ENCODE measurements at regions of chr17 and their contacts with region 1.

Region 1: GRCh38 chr17:49997791-49998703 is 3.0 kb upstream of the DLX3 start:
- H3K4me3 ChIP-seq: no peak overlapping the region
- H3K27ac ChIP-seq: no peak overlapping the region
- H3K4me1 ChIP-seq: peaks cover 4% of the 10 kb centered on the region
- CTCF ChIP-seq: peak; percentile 95

Region 2: GRCh38 chr17:49556223-49556971 is 441.6 kb before region 1 on chr17:
- CTCF ChIA-PET with region 1: interaction called, 38 read pairs
- POLR2A ChIA-PET with region 1: no interaction called
- H3K4me3 ChIP-seq: no peak overlapping the region
- H3K27ac ChIP-seq: peak overlapping the region; percentile 12; the same call in 1 of the 2 replicates
- H3K4me1 ChIP-seq: 0 out of 2 replicates have a peak, but pooled peaks cover 2% of the 10 kb centered on the region
- CTCF ChIP-seq: peak; percentile 97

Region 3: DNA sequence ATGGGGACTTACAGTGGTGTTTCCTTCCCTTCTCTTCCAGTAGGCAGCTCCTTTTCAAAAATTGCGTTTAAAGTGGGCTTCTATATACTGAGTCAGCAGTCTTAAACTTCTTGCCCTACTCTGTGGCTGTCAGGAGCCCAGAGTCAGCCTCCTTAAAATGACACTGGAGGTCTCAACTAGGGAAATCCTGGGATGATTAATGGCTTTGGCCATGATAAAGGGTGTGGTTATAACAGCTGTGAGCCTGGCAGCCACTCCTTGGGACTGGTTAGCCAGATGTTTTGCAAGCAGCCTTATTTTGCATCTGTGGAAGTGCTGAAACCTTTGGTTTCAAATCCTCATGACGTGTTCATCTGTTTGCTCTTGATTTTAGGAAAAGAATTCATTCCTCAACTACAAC is 175.2 kb before region 1 on chr17:
- CTCF ChIA-PET with region 1: interaction called, 27 read pairs
- POLR2A ChIA-PET with region 1: no interaction called
- H3K4me3 ChIP-seq: no peak overlapping the region
- H3K27ac ChIP-seq: no peak overlapping the region
- H3K4me1 ChIP-seq: no peaks in the 10 kb centered on the region
- CTCF ChIP-seq: no peak

Region 4: DNA sequence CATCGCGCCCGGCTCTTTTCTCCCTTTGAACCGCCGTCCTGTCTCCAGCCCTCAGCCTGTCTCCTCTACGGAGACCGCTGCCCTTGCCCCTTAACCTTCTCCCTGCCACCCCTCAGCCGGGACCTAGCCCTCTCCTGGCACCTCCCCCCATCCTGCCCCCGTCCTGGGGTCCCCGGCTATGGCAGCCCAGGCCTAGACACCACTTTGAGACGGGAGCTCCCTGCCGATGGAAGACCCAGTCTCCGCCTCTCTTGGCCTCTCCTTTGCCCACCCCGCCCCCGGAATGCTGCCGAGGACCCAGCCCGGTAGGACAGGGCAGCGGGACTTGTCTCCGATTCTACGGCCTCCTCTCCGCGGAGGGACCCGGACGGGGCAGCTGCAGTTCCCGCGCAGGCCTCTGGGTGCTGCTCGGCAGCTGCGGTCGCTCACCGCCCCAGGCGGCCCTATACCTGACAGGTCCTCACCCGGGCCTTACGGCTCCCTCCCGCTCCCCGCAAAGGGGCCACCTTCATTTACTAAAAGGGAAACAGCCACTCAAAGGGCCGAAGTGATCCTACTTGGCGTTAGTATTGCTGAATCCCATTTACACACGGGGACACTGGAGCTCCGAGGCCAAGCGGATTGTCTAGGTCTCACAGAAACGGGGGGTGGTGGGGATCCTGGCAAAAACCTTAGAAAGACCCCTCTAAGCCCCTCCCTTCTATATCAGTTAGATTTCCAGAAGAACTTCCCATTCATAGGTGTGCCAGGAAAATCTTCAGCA is 117.6 kb before region 1 on chr17:
- CTCF ChIA-PET with region 1: interaction called, 122 read pairs
- POLR2A ChIA-PET with region 1: interaction called, 5 read pairs
- H3K4me3 ChIP-seq: peak overlapping the region; percentile 21
- H3K27ac ChIP-seq: no peak overlapping the region
- H3K4me1 ChIP-seq: peaks cover 5% of the 10 kb centered on the region; the same call in 1 of the 2 replicates
- CTCF ChIP-seq: peak; percentile 76

Region 5: DNA sequence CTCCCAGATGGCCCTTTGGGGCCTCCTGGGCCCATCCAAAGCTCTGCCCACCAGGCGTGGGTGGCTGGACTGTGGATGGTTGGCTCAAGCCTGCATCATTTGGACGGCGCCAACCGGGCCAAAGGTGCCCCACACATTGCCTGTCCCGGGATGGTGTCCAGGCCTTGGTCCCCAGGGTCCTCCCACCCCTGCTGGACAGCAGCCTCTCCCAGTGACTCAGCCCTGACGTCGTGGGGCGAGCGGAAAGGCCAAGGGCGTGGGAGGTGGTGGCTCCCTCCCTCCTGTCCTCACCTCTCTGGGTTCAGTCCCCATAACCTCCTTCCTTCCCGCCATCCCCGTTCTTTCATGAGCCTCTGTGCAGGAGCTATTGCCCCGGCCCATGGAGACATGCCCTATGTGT is 71.2 kb before region 1 on chr17:
- CTCF ChIA-PET with region 1: interaction called, 28 read pairs
- POLR2A ChIA-PET with region 1: no interaction called
- H3K4me3 ChIP-seq: no peak overlapping the region
- H3K27ac ChIP-seq: no peak overlapping the region
- H3K4me1 ChIP-seq: no peaks in the 10 kb centered on the region
- CTCF ChIP-seq: no peak

Region 6: GRCh38 chr17:49959183-49959935 is 38.7 kb before region 1 on chr17:
- CTCF ChIA-PET with region 1: interaction called, 86 read pairs
- POLR2A ChIA-PET with region 1: interaction called, 8 read pairs
- H3K4me3 ChIP-seq: no peak overlapping the region
- H3K27ac ChIP-seq: no peak overlapping the region
- H3K4me1 ChIP-seq: no peaks in the 10 kb centered on the region
- CTCF ChIP-seq: no peak

Region 7: DNA sequence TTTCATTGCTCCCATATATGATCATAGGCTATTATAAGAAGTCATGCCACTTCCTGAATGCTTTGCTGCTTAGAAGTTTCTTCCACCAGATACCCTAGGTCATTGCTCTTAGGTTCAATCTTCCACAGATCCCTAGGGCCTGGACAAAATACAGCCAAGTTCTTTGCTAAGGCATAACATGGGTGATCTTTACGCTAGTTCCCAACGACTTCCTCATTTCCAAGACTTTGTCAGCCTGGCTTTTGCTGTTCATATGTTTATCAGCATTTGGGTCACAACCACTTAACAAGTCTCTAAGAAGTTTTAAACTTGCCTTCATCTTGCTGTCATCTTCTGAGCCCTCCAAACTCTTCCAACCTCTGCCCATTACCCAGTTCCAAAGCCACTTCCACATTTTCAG is 17.1 kb after region 1 on chr17:
- CTCF ChIA-PET with region 1: interaction called, 27 read pairs
- POLR2A ChIA-PET with region 1: no interaction called
- H3K4me3 ChIP-seq: no peak overlapping the region
- H3K27ac ChIP-seq: no peak overlapping the region
- H3K4me1 ChIP-seq: no peaks in the 10 kb centered on the region
- CTCF ChIP-seq: no peak

Region 8: GRCh38 chr17:50139950-50140871 is 142.2 kb after region 1 on chr17:
- CTCF ChIA-PET with region 1: no interaction called
- POLR2A ChIA-PET with region 1: no interaction called
- H3K4me3 ChIP-seq: no peak overlapping the region
- H3K27ac ChIP-seq: no peak overlapping the region
- H3K4me1 ChIP-seq: no peaks in the 10 kb centered on the region
- CTCF ChIP-seq: peak; percentile 87

Measured in HEK293 (cell line).